ENCODE measurements at regions of chrX and their contacts with region 1.

Region 1: GRCh38 chrX:7191681-7192110 is 43.7 kb upstream of the PUDP start:
- DNase-seq: peak; percentile 37
- ATAC-seq: peak; percentile 94
- H3K4me3 Mint-ChIP-seq: no peak overlapping the region
- H3K27ac Mint-ChIP-seq: no peak overlapping the region
- H3K4me1 Mint-ChIP-seq: peaks cover 14% of the 10 kb centered on the region
- H3K27me3 Mint-ChIP-seq: no peaks in the 10 kb centered on the region; the same call in 1 of the 2 replicates
- CTCF ChIP-seq: no peak; the same call in 1 of the 2 replicates

Region 2: DNA sequence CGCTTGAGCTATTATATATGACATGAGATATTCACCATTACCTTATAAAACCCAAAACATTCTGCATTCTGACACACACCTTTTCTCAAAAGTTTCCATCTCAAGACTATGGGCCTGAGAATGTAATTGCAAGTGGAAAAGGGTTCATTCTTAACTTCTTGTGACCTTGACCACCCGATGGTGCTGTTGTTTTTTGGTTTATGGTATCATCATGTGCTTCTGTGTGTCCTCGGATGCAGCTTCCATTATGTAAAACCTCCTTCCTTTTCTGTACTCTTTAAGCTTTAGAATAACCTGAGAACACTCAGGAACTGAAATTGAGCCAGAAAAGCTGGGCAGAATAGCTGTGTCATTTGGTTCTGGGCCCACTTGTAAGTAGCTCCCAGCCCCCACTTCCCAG is 27.5 kb before region 1 on chrX:
- CTCF ChIA-PET with region 1: interaction called, 12 read pairs
- POLR2A ChIA-PET with region 1: no interaction called
- DNase-seq: no peak
- ATAC-seq: no peak
- H3K4me3 Mint-ChIP-seq: no peak overlapping the region
- H3K27ac Mint-ChIP-seq: no peak overlapping the region
- H3K4me1 Mint-ChIP-seq: peaks cover 12% of the 10 kb centered on the region
- H3K27me3 Mint-ChIP-seq: no peaks in the 10 kb centered on the region
- CTCF ChIP-seq: no peak

Region 3: GRCh38 chrX:7318661-7319060 is 127.0 kb after region 1 on chrX:
- CTCF ChIA-PET with region 1: interaction called, 10 read pairs
- POLR2A ChIA-PET with region 1: no interaction called
- DNase-seq: peak; percentile 9
- ATAC-seq: peak; percentile 58; the same call in 1 of the 2 replicates
- H3K4me3 Mint-ChIP-seq: no peak overlapping the region
- H3K27ac Mint-ChIP-seq: no peak overlapping the region
- H3K4me1 Mint-ChIP-seq: peaks cover 9% of the 10 kb centered on the region
- H3K27me3 Mint-ChIP-seq: no peaks in the 10 kb centered on the region; the same call in 1 of the 2 replicates
- CTCF ChIP-seq: no peak

Measured in WTC11 (cell line).